Left ventricle myocardium inferior (tissue), 1 donor: ENCODE measurements at regions of chr5 and their contacts with region 1.

Region 1: DNA sequence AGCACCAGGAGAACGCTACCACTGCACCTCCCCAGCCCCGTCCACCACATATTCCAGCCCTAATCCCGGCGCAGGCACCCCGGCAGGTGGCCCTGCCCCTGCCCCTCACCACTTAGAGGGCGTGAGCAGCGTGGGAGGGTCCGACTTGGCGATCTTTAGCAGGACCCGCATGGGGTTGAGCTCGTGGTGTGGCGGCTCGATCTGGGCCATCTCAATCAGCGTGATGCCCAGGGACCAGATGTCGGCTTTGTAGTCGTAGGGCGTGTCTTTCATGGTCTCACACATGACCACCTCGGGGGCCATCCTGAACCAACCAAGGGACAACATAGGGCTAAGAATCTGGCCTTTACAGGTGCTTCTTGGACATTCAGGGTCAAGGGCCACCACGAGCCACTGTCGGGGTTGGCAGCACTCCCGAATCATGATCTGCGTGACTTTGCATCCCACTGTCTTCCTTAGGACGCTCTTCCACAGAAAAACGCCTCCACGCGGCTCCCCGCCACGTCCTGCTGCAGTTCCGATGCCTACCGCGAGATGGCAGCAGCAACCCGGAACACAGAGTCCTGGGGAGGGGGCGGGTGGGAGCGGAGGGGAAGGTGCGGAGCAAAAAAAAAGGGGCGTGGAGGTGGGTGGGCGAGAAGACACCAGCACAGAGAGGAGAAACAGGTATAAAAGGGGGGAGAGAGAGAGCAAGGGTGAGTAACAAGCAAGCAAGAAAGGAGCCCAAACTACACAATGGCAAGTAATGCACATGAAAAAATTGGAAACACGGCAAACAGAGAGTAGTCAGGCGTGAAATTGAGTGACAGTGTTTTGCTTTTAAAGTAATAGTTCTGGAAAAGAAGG is 81.3 kb downstream of the STK10 start:
- DNase-seq: peak; percentile 62
- H3K4me3 ChIP-seq: peak overlapping the region; percentile 31
- H3K27ac ChIP-seq: no peak overlapping the region
- H3K4me1 ChIP-seq: peaks cover 69% of the 10 kb centered on the region
- H3K27me3 ChIP-seq: no peaks in the 10 kb centered on the region
- CTCF ChIP-seq: peak; percentile 93

Region 2: GRCh38 chr5:172283020-172283861 is 176.5 kb after region 1 on chr5 and contains the start of gene UBTD2:
- intact Hi-C with region 1: loop called (anchors 10 kb)
- DNase-seq: peak; percentile 88
- H3K4me3 ChIP-seq: peak within 1 kb of the TSS; percentile 99
- H3K27ac ChIP-seq: peak within 1 kb of the TSS; percentile 97
- H3K4me1 ChIP-seq: peaks cover 50% of the 10 kb centered on the region
- H3K27me3 ChIP-seq: no peaks in the 10 kb centered on the region
- CTCF ChIP-seq: peak; percentile 67
- total RNA-seq, gene UBTD2: 7.6 TPM